ENCODE measurements at regions of chr11 and their contacts with region 1.

Region 1: DNA sequence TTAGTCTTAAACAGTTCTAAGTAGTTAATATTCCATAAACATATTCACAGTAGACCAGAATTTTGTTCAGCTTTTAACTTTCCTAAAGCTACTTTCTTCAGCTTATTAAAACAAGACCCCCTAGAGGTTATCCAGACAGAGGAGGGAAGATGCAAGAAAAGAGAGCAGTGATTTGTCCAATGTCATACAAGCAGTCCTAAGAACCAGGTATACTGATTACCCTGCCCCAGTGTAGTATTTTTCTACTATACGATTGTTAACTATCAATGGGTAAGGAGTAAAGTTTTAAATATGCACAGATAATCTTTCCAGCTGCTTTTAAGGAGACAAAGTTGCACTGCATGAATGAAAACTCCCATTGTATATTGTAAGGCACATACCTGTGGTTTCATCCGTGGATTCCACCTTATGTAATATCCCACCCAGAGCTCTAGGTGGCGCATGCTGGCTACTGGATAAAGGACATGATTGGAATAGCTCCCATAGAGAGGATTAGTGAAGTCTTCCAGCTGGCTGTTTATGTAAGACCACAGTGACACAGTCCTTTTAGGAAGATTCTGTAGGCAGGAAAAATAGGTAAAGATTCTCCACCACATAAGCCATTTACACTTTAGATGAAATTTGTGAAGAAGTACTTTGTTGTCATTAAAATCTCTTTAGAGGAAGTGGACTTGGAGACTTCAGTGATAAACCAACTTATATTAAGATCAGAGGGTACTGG is 45.6 kb downstream of the CEP57 start:
- DNase-seq: peak; percentile 8 to 70 (median 55)
- ATAC-seq: peak; percentile 93
- H3K4me3 ChIP-seq: no peak overlapping the region
- H3K4me3 Mint-ChIP-seq: no peak overlapping the region
- H3K27ac ChIP-seq: no peak overlapping the region
- H3K27ac Mint-ChIP-seq: no peak overlapping the region
- H3K4me1 ChIP-seq: no peaks in the 10 kb centered on the region
- H3K4me1 Mint-ChIP-seq: no peaks in the 10 kb centered on the region
- H3K27me3 ChIP-seq: no peaks in the 10 kb centered on the region
- H3K27me3 Mint-ChIP-seq: no peaks in the 10 kb centered on the region
- CTCF ChIP-seq: peak; percentile 86

Region 2: DNA sequence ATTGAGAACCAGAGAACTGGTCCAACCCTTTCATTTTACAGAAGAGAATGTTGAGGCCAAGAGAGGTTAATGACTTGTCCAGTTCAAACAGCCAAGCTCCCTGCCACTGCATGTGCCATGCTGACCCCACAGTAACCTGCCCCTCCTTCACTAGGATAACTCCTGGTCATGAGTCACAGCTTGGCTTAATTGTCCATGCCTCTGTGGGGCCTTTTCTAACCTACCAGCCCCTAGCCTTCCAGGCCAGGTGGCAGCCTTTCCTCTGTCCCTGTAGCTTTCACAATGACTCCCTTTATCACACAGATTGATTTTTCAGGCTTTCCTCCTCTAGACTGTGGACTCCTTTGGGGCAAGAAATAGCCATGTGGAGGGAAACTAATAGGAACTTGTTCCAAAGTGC is 1171.6 kb before region 1 on chr11:
- CTCF ChIA-PET with region 1: no interaction called
- POLR2A ChIA-PET with region 1: no interaction called
- intact Hi-C with region 1: no loop called
- DNase-seq: no peak
- ATAC-seq: no peak
- H3K4me3 ChIP-seq: no peak overlapping the region
- H3K4me3 Mint-ChIP-seq: no peak overlapping the region
- H3K27ac ChIP-seq: no peak overlapping the region
- H3K27ac Mint-ChIP-seq: no peak overlapping the region
- H3K4me1 ChIP-seq: no peaks in the 10 kb centered on the region
- H3K4me1 Mint-ChIP-seq: no peaks in the 10 kb centered on the region
- H3K27me3 ChIP-seq: no peaks in the 10 kb centered on the region
- H3K27me3 Mint-ChIP-seq: peaks cover 5% of the 10 kb centered on the region
- CTCF ChIP-seq: no peak

Region 3: DNA sequence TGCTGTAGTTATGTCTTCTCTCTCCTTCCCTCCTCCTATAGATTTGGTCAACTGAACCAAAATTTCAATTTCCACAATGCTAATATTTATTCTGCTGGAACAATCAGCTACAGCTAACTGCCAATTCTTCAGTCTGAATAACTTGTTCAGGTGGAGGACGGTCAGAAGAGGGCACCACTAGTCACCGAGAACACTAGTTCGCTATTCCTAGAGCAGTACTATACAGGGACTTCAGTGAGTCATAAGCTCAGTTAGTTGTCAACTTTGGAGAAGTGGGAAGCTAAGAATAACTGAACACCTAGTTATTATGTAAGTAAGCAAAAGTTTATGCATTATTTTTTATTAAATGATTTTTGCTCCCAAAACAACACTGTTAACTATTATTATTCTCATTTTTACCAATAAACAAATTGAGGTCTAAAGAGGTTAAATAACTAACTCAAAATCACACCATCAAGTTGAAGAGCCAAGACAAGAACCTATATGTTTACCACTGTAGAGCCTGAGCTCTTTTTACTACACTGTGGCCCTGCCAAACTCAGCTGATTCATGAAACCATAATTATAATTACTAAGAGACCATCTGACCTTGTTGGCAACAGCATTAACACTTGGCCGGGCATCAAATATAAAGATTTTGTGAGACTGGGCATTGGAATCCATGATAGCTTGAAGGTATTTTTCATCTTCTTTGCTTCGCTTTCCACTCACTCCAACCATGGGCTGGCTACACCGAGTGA is 13.3 kb after region 1 on chr11:
- CTCF ChIA-PET with region 1: interaction called, 13 read pairs
- POLR2A ChIA-PET with region 1: no interaction called
- intact Hi-C with region 1: loop called in 1 of 2 experiments (anchors 2 kb)
- DNase-seq: peak in 4 of 9 experiments; percentile 5 to 39 (median 19)
- ATAC-seq: peak; percentile 38
- H3K4me3 ChIP-seq: no peak overlapping the region
- H3K4me3 Mint-ChIP-seq: no peak overlapping the region
- H3K27ac ChIP-seq: no peak overlapping the region
- H3K27ac Mint-ChIP-seq: no peak overlapping the region
- H3K4me1 ChIP-seq: no peaks in the 10 kb centered on the region
- H3K4me1 Mint-ChIP-seq: no peaks in the 10 kb centered on the region
- H3K27me3 ChIP-seq: no peaks in the 10 kb centered on the region
- H3K27me3 Mint-ChIP-seq: no peaks in the 10 kb centered on the region
- CTCF ChIP-seq: no peak

Region 4: GRCh38 chr11:96045622-96046456 is 209.9 kb after region 1 on chr11:
- CTCF ChIA-PET with region 1: interaction called, 3 read pairs
- POLR2A ChIA-PET with region 1: no interaction called
- intact Hi-C with region 1: loop called in 1 of 2 experiments (anchors 1 kb)
- DNase-seq: no peak
- ATAC-seq: no peak
- H3K4me3 ChIP-seq: no peak overlapping the region
- H3K4me3 Mint-ChIP-seq: no peak overlapping the region
- H3K27ac ChIP-seq: no peak overlapping the region
- H3K27ac Mint-ChIP-seq: peak overlapping the region; percentile 52
- H3K4me1 ChIP-seq: peaks cover 5% of the 10 kb centered on the region
- H3K4me1 Mint-ChIP-seq: peaks cover 50% of the 10 kb centered on the region
- H3K27me3 ChIP-seq: no peaks in the 10 kb centered on the region
- H3K27me3 Mint-ChIP-seq: no peaks in the 10 kb centered on the region
- CTCF ChIP-seq: no peak

Measured in CD8-positive, alpha-beta T cell (primary cell).